B cell (primary cell): ENCODE measurements at regions of chr6 and their contacts with region 1.

Region 1: DNA sequence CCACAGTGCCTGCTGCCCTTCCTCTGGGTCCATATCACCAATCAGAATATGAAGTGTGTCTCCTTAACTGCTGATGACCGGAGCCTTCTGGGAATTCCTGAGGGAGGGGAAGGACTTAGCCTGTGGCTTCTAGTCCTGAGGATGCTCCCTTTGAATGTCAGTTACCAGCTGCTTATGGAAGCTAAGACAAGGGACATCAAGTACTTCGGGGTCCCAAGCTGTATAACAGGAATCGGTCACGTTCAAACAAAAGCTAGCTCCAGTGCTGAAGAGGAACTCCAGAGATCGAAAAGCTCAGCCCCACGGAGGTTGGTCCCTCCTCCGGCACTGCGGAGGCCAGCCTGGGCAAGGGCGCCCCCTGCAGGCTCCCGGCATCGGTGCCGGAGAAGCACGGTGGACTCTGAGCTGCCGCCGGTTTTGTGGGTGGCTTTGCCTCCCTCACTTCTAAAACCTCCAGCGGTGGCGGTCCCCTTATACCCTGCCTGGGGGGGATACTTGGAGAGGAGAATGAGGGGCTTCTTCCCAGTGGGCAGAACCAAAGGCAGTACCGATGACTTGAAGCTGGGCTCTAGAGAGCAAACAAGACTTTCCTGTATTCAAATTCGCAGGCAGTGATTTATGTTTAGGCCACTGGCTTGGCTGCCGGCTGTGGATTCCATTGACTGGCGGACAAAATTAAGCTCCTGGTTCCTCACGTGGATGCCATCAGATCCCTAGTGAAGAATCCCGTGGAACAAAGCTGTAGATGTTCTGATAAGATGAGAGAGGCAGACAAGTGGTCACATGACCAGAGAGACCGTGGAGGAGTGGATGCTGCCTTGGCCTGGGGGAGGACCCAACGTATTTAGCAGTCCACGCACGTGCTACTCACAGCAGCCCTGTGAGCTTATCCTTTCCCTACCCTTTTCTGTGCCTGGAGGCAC is 16.2 kb upstream of the UBR2 start:
- DNase-seq: peak; percentile 89
- ATAC-seq: peak; percentile 98
- H3K4me3 ChIP-seq: peak overlapping the region; percentile 31 to 65 (median 56)
- H3K4me3 Mint-ChIP-seq: peak overlapping the region; percentile 84
- H3K27ac ChIP-seq: peak overlapping the region; percentile 3 to 43
- H3K27ac Mint-ChIP-seq: peak overlapping the region; percentile 78
- H3K4me1 ChIP-seq: peaks cover 11 to 13% of the 10 kb centered on the region in 2 donors
- H3K4me1 Mint-ChIP-seq: peaks cover 14% of the 10 kb centered on the region
- H3K27me3 ChIP-seq: peaks cover 0 to 5% (median 0%) of the 10 kb centered on the region in 4 experiments
- H3K27me3 Mint-ChIP-seq: peaks cover 7% of the 10 kb centered on the region
- CTCF ChIP-seq: peak; percentile 98

Region 2: DNA sequence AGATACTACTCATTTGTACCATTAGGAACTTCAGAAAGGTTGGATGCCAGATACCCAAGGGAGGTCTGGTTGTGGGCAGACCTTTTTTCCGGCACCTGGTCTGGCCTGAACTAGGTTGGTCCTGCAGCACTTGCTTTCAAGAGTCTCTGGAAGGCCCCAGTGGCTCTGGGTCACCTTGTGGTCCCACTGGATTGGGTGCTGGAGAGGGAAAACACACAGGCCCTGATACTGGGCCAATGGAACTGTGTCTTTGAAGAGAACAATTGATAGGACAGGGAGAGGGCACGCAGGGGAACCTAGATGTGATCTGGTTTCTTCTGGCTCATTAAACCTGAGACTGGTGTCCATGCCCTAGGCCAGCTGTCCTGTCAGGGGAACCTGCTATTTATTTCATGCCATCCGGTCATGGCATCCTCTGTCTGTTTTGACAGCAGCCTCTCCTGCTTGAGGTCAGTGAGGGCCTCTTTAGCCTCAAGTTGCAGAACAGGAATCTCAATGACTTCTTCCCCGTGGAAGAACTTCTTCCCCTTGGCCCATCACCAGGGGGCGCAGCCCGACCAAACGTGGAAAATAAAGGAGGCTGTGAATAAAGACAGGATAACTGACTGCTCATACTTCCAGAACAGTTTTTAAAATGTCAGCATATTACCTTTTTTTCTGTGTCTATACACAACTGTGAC is 472.4 kb before region 1 on chr6:
- CTCF ChIA-PET with region 1: interaction called, 14 read pairs
- POLR2A ChIA-PET with region 1: no interaction called
- intact Hi-C with region 1: loop called (anchors 2 kb)
- DNase-seq: peak; percentile 56
- ATAC-seq: no peak
- H3K4me3 ChIP-seq: no peak overlapping the region
- H3K4me3 Mint-ChIP-seq: no peak overlapping the region
- H3K27ac ChIP-seq: no peak overlapping the region
- H3K27ac Mint-ChIP-seq: no peak overlapping the region
- H3K4me1 ChIP-seq: no peaks in the 10 kb centered on the region
- H3K4me1 Mint-ChIP-seq: no peaks in the 10 kb centered on the region
- H3K27me3 ChIP-seq: no peaks in the 10 kb centered on the region
- H3K27me3 Mint-ChIP-seq: no peaks in the 10 kb centered on the region
- CTCF ChIP-seq: peak; percentile 70

Region 3: DNA sequence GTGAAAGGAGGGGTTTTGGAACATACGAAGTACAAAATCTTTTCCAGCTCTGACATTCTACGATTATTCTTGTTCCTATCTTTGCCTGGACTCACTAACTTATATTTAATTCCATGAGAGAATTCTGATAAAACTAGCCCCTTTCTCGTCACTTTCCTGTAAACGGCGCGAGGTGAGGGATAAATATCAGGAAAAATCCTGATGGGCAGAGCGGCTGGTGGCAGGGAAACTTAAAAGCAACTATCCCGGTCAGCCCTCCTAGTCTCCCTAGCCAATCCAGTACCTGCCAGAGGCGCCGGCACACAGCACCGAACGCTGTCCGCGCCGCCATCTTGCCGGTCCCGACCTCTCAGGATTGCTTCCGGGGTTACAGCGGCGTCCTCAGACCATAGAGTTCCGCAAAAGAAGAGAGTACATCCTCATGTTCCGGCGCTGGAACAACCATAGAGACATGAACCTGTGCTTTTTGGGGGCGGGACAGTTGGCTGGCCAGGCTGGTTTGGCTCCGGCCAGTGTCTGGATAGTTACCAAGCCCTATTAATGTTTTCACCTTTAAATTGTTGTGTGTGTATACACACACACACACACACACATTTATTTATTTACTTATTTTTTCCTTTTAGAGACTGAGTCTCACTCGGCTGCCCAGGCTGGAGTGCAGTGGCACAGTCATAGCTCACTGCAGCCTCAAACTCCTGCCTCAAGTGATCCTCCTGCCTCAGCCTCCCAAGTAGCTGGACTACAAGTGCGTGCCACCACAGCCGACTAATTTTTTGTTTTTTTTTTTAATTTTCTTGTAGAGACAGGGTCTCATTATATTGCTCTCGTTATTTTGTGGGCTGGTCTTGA is 329.9 kb before region 1 on chr6 and contains the start of gene MRPS10:
- CTCF ChIA-PET with region 1: interaction called, 19 read pairs
- POLR2A ChIA-PET with region 1: no interaction called
- intact Hi-C with region 1: loop called (anchors 1 kb)
- DNase-seq: peak; percentile 92
- ATAC-seq: peak; percentile 99
- H3K4me3 ChIP-seq: peak within 1 kb of the TSS; percentile 76 to 98 (median 86)
- H3K4me3 Mint-ChIP-seq: peak within 1 kb of the TSS; percentile 99
- H3K27ac ChIP-seq: peak within 1 kb of the TSS; percentile 58 to 76
- H3K27ac Mint-ChIP-seq: peak within 1 kb of the TSS; percentile 98
- H3K4me1 ChIP-seq: peaks cover 7 to 14% of the 10 kb centered on the region in 2 donors
- H3K4me1 Mint-ChIP-seq: peaks cover 23% of the 10 kb centered on the region
- H3K27me3 ChIP-seq: no peaks in the 10 kb centered on the region
- H3K27me3 Mint-ChIP-seq: peaks cover 4% of the 10 kb centered on the region
- CTCF ChIP-seq: no peak
- total RNA-seq, gene MRPS10: 26.4 and 28.6 TPM in 2 replicates

Region 4: GRCh38 chr6:42315991-42316378 is 231.7 kb before region 1 on chr6:
- CTCF ChIA-PET with region 1: interaction called, 31 read pairs
- POLR2A ChIA-PET with region 1: no interaction called
- intact Hi-C with region 1: no loop called
- DNase-seq: no peak
- ATAC-seq: no peak
- H3K4me3 ChIP-seq: no peak overlapping the region
- H3K4me3 Mint-ChIP-seq: no peak overlapping the region
- H3K27ac ChIP-seq: no peak overlapping the region
- H3K27ac Mint-ChIP-seq: no peak overlapping the region
- H3K4me1 ChIP-seq: peaks cover 7 to 18% of the 10 kb centered on the region in 2 donors
- H3K4me1 Mint-ChIP-seq: peaks cover 19% of the 10 kb centered on the region
- H3K27me3 ChIP-seq: no peaks in the 10 kb centered on the region
- H3K27me3 Mint-ChIP-seq: no peaks in the 10 kb centered on the region
- CTCF ChIP-seq: no peak

Region 5: GRCh38 chr6:42511803-42512422 is 35.8 kb before region 1 on chr6:
- CTCF ChIA-PET with region 1: interaction called, 25 read pairs
- POLR2A ChIA-PET with region 1: no interaction called
- intact Hi-C with region 1: no loop called
- DNase-seq: no peak
- ATAC-seq: no peak
- H3K4me3 ChIP-seq: no peak overlapping the region
- H3K4me3 Mint-ChIP-seq: no peak overlapping the region
- H3K27ac ChIP-seq: no peak overlapping the region
- H3K27ac Mint-ChIP-seq: no peak overlapping the region
- H3K4me1 ChIP-seq: peaks cover 3 to 10% of the 10 kb centered on the region in 2 donors
- H3K4me1 Mint-ChIP-seq: peaks cover 16% of the 10 kb centered on the region
- H3K27me3 ChIP-seq: no peaks in the 10 kb centered on the region
- H3K27me3 Mint-ChIP-seq: no peaks in the 10 kb centered on the region
- CTCF ChIP-seq: no peak

Region 6: DNA sequence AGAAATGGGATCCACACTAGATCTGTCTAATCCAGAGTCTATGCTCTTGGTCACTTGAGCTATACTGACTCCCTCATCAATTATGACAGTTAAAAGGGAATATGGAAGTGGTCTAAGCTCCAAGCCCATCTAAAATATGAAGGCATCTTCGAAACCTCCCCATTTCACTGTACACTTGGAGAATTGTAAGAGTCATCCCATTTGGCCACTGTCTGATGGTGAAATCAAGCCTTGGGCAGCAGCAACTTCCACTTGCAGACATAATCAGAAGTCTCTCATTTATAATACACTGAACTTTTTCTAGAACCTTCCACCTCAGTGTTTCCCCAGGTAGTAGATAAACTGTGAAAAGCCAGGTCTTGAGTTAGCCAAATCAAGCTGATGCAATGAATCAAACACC is 10.1 kb before region 1 on chr6:
- CTCF ChIA-PET with region 1: interaction called, 46 read pairs
- POLR2A ChIA-PET with region 1: no interaction called
- intact Hi-C with region 1: no loop called
- DNase-seq: no peak
- ATAC-seq: no peak
- H3K4me3 ChIP-seq: no peak overlapping the region
- H3K4me3 Mint-ChIP-seq: no peak overlapping the region
- H3K27ac ChIP-seq: no peak overlapping the region
- H3K27ac Mint-ChIP-seq: no peak overlapping the region
- H3K4me1 ChIP-seq: no peaks in the 10 kb centered on the region
- H3K4me1 Mint-ChIP-seq: no peaks in the 10 kb centered on the region
- H3K27me3 ChIP-seq: no peaks in the 10 kb centered on the region
- H3K27me3 Mint-ChIP-seq: peaks cover 7% of the 10 kb centered on the region
- CTCF ChIP-seq: no peak

Region 7: DNA sequence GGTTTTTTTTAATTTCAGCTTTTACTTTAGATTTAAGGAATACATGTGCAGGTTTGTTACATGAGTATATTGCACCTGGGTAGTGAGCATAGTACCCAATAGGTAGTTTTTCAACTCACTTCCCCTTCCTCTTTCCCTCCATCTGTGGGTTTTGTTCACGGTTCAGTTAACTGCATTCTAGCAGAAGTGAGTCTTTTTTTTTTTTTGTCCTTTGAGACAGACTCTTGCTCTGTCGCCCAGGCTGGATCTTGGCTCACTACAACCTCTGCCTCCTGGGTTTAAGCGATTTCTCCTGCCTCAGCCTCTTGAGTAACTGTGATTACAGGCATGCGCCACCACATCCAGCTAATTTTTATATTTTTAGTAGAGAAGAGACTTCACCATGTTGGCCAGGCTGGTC is 24.9 kb after region 1 on chr6:
- CTCF ChIA-PET with region 1: interaction called, 21 read pairs
- POLR2A ChIA-PET with region 1: interaction called, 12 read pairs
- intact Hi-C with region 1: no loop called
- DNase-seq: peak; percentile 88
- ATAC-seq: peak; percentile 98
- H3K4me3 ChIP-seq: peak overlapping the region in 1 of 5 experiments; percentile 11
- H3K4me3 Mint-ChIP-seq: peak overlapping the region; percentile 3
- H3K27ac ChIP-seq: peak overlapping the region; percentile 51 to 68
- H3K27ac Mint-ChIP-seq: peak overlapping the region; percentile 75
- H3K4me1 ChIP-seq: peaks cover 28 to 31% of the 10 kb centered on the region in 2 donors
- H3K4me1 Mint-ChIP-seq: peaks cover 36% of the 10 kb centered on the region
- H3K27me3 ChIP-seq: no peaks in the 10 kb centered on the region
- H3K27me3 Mint-ChIP-seq: no peaks in the 10 kb centered on the region
- CTCF ChIP-seq: no peak

Region 8: DNA sequence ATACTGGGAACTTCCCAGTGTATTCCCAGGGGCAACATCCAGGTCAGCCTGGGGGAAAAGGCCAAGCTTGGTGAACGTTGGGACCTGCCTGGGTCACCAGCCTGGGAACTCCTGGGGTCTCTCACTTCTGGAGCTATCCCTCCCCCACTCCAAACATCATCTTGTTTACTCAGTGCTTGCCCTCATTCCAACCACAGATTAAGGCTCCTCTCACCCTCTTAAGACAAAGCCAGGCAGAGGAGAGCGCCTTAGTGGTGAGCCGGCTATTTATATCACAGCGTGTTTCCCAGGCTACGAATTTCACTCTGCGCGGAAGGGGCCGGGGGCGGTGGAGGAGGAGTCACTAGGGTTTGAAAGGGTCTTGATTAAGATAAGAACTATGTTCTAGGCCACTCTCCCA is 162.6 kb after region 1 on chr6:
- CTCF ChIA-PET with region 1: no interaction called
- POLR2A ChIA-PET with region 1: no interaction called
- intact Hi-C with region 1: no loop called
- DNase-seq: no peak
- ATAC-seq: no peak
- H3K4me3 ChIP-seq: no peak overlapping the region
- H3K4me3 Mint-ChIP-seq: no peak overlapping the region
- H3K27ac ChIP-seq: no peak overlapping the region
- H3K27ac Mint-ChIP-seq: no peak overlapping the region
- H3K4me1 ChIP-seq: no peaks in the 10 kb centered on the region
- H3K4me1 Mint-ChIP-seq: no peaks in the 10 kb centered on the region
- H3K27me3 ChIP-seq: peaks cover 0 to 3% (median 1%) of the 10 kb centered on the region in 4 experiments
- H3K27me3 Mint-ChIP-seq: peaks cover 11% of the 10 kb centered on the region
- CTCF ChIP-seq: no peak

Region 9: DNA sequence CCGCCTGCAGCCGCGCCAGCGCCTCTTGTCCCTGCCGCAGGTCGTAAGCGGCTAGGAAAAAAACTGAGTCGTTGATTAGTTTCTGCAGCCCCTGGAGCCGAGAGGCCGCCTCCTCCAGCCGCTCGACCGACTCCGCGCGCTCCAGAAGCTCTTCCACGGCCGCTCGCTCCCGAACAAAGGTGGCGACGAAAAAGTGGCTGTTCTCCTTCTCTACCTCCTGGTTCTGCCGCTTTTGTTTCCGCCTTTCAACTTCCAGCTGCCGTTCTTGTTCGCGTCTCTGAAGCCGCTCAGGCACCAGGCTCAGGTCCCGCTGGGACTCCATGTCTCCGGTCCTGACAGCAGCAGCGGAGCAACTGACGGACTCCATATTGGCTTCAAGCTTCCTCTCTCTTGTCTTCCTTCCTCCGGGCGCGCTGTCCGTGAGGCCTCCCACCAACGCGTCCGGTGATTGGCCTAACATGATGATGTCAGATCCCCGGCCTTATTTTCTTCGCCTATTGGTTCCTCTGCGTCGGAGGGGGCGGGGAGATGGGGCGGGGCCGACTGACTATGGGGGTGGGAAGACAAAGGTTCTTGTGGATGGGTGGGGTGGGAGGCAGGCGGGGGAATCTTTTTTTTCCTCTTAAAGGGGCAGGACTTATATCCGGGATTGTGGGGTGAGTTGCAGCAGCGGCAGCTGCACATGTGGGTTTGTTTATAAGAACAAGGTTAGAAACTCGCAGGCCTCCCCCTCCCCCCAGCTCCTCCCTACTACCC is 198.2 kb after region 1 on chr6 and contains the start of gene TBCC:
- CTCF ChIA-PET with region 1: no interaction called
- POLR2A ChIA-PET with region 1: no interaction called
- intact Hi-C with region 1: no loop called
- DNase-seq: peak; percentile 96
- ATAC-seq: peak; percentile 74
- H3K4me3 ChIP-seq: peak within 1 kb of the TSS; percentile 81 to 100 (median 90)
- H3K4me3 Mint-ChIP-seq: peak within 1 kb of the TSS; percentile 100
- H3K27ac ChIP-seq: peak within 1 kb of the TSS; percentile 78 to 91
- H3K27ac Mint-ChIP-seq: peak within 1 kb of the TSS; percentile 100
- H3K4me1 ChIP-seq: peaks cover 21 to 28% of the 10 kb centered on the region in 2 donors
- H3K4me1 Mint-ChIP-seq: peaks cover 35% of the 10 kb centered on the region
- H3K27me3 ChIP-seq: no peaks in the 10 kb centered on the region
- H3K27me3 Mint-ChIP-seq: no peaks in the 10 kb centered on the region
- CTCF ChIP-seq: no peak
- total RNA-seq, gene TBCC: 54.6 and 55.7 TPM in 2 replicates